RWPE1 (cell line): ENCODE measurements at regions of chr18 and their contacts with region 1.

Region 1: GRCh38 chr18:7566567-7567473 is at the start of gene PTPRM:
- DNase-seq: peak; percentile 68
- H3K27ac ChIP-seq: peak within 1 kb of the TSS; percentile 82
- CTCF ChIP-seq: peak; percentile 88

Region 2: DNA sequence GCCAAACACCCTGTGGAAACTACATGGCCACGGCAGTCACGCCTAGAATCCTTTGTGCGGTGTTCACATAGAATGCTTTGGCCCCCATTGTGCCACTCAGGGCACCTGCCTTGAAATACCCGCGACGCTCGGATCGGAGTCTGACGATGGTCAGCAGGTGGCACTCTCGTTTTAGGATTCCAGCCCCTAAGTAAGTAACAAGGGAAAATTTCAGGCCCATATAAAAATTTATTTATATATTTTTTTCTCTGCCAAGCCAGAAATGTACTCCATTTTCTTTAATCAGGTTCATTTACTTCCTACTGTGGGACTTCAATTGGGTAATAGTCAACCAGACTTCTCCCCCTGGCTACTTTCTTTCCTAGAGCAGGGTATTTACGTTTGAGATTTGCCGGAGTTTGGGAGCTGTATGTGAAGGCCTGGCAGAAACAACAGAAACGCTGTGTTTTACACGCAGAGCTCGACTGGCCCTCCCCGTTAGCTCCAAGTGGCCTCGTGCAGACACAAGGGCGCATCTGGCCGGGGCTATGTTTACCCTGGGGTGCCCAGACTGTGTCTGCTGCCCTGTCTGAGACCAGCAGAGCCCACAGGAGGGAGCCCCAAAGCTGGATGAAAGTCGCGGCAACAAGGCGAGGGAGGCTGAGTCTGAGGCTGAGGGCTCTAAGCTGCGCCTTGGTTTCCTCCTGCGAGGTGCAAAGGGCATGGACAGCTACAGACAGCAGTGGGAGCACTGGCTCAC is 294.3 kb before region 1 on chr18:
- CTCF ChIA-PET with region 1: interaction called, 49 read pairs
- POLR2A ChIA-PET with region 1: no interaction called
- DNase-seq: peak; percentile 54
- H3K27ac ChIP-seq: peak overlapping the region; percentile 79
- CTCF ChIP-seq: peak; percentile 61

Region 3: DNA sequence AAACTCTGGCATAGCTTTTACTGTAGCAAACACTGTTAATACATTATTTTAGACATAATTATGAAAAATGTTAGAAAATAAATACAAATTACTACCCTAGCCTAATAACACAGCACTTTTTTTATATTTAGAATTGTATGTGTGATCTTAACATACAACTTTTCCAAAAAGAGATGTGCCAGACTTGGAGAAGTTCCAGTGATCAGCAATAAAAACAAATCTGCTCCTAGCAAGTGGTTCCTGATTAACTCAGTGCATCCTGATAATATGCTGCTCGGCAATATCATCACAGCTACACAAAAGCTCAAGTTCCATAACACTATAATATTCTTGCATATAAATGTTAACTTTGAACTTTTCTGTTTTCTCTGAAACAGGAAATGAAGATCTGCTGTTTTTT is 22.1 kb before region 1 on chr18:
- CTCF ChIA-PET with region 1: interaction called, 10 read pairs
- POLR2A ChIA-PET with region 1: no interaction called
- DNase-seq: no peak
- H3K27ac ChIP-seq: no peak overlapping the region
- CTCF ChIP-seq: no peak

Region 4: DNA sequence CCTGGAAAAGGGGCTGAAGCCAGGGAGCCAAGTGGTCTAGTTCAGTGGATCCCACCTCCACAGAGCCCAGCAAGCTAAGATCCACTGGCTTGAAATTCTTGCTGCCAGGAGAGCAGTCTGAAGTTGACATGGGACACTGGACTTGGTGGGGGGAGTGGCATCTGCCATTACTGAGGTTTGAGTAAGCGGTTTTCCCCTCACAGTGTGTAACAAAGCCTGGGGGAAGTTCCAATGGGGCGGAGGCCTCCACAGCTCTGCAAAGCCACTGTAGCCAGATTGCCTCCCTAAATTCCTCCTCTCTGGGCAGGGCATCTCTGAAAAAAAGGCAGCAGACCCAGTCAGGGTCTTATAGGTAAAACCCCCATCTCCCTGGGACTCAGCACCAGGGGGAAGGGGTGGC is 144.7 kb after region 1 on chr18:
- CTCF ChIA-PET with region 1: no interaction called
- POLR2A ChIA-PET with region 1: no interaction called
- DNase-seq: no peak
- H3K27ac ChIP-seq: no peak overlapping the region
- CTCF ChIP-seq: no peak